GM12878 (cell line): ENCODE measurements at regions of chr1 and their contacts with region 1.

Region 1: DNA sequence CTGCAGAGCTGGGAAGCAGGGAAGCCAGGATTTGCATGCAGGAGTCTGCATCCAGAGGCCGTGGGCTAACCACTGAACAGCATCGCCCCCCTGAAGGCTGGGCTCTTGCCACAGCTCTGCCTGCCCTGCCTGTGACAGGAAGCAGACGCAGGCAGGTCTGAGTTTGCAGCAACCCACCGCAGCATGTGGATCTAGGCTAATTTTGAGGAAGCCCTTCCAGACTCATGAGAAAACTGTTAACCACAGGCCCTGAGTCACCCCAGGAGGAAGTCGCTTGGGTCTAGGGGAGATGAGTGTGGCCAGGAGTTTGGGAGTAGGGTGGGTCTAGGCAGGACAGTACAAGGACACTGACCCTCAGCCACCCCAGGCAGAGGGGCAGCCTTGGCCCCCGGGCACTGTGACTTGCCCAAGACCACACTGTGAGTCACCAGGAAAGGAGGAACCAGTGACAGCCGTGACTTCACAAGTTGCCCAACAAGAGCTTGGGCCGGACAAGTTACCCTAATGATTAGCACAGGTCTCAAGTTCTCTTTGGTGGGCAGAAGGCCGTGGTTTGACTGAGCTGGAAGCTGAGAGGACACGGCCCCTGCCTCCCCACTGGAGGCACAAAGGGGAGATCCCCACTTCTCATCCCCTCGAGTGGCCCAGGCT is 904 bp downstream of the LAPTM5 start:
- DNase-seq: no peak
- ATAC-seq: peak; percentile 16
- H3K4me3 ChIP-seq: peak overlapping the region; percentile 98
- H3K27ac ChIP-seq: peak overlapping the region; percentile 93
- H3K4me1 ChIP-seq: peaks cover 48% of the 10 kb centered on the region
- H3K27me3 ChIP-seq: no peaks in the 10 kb centered on the region
- CTCF ChIP-seq: no peak
- EP300 ChIP-seq: peak in 1 of 2 experiments; percentile 59; a peak in 1 of 4 replicates
- POLR2A ChIP-seq: no peak; the same call in 1 of the 2 replicates
- RAD21 ChIP-seq: no peak

Region 2: GRCh38 chr1:30743584-30744059 is 13.0 kb before region 1 on chr1:
- CTCF ChIA-PET with region 1: interaction called, 107 read pairs
- POLR2A ChIA-PET with region 1: interaction called, 741 read pairs
- RAD21 ChIA-PET with region 1: interaction called, 462 read pairs
- SMC1A ChIA-PET with region 1: interaction called, 556 read pairs
- in situ Hi-C with region 1: no loop called
- intact Hi-C with region 1: loop called (anchors 1 kb)
- DNase-seq: peak; percentile 82
- ATAC-seq: peak; percentile 44
- H3K4me3 ChIP-seq: peak overlapping the region; percentile 98
- H3K27ac ChIP-seq: peak overlapping the region; percentile 93
- H3K4me1 ChIP-seq: peaks cover 91% of the 10 kb centered on the region
- H3K27me3 ChIP-seq: no peaks in the 10 kb centered on the region
- CTCF ChIP-seq: no peak; a peak in 1 of 6 replicates
- EP300 ChIP-seq: peak in 1 of 2 experiments; percentile 71; a peak in 2 of 4 replicates
- POLR2A ChIP-seq: no peak; the same call in 1 of the 2 replicates
- RAD21 ChIP-seq: no peak